ENCODE measurements at regions of chr22 and their contacts with region 1.

Region 1: GRCh38 chr22:21712894-21713712 is 22.5 kb downstream of the YPEL1 start:
- DNase-seq: peak; percentile 78
- H3K4me3 Mint-ChIP-seq: peak overlapping the region; percentile 39
- H3K27ac Mint-ChIP-seq: no peak overlapping the region
- H3K4me1 Mint-ChIP-seq: peaks cover 26% of the 10 kb centered on the region
- H3K27me3 Mint-ChIP-seq: no peaks in the 10 kb centered on the region
- CTCF ChIP-seq: peak; percentile 75

Region 2: DNA sequence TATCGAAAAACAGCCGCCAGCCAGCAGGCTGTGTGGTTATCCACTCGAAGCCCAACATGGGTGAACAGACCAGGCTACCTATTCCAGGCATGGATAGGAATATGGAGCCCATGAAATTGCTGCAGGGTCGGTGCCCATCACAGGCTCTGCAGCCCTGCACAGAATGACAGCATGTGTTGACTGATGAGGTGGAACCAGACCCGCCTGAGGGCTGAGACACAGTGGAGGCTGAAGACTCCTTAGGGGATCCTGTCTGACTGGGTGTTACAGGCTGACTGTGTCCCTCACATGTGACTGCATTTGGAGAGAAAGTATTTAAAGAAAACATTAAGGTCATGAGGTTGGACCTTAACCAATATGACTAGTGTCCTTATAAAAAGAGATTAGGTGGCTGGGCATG is 28.7 kb after region 1 on chr22:
- CTCF ChIA-PET with region 1: no interaction called
- POLR2A ChIA-PET with region 1: no interaction called
- intact Hi-C with region 1: no loop called
- DNase-seq: no peak
- H3K4me3 Mint-ChIP-seq: no peak overlapping the region
- H3K27ac Mint-ChIP-seq: no peak overlapping the region
- H3K4me1 Mint-ChIP-seq: no peaks in the 10 kb centered on the region
- H3K27me3 Mint-ChIP-seq: peaks cover 32% of the 10 kb centered on the region
- CTCF ChIP-seq: no peak

Region 3: DNA sequence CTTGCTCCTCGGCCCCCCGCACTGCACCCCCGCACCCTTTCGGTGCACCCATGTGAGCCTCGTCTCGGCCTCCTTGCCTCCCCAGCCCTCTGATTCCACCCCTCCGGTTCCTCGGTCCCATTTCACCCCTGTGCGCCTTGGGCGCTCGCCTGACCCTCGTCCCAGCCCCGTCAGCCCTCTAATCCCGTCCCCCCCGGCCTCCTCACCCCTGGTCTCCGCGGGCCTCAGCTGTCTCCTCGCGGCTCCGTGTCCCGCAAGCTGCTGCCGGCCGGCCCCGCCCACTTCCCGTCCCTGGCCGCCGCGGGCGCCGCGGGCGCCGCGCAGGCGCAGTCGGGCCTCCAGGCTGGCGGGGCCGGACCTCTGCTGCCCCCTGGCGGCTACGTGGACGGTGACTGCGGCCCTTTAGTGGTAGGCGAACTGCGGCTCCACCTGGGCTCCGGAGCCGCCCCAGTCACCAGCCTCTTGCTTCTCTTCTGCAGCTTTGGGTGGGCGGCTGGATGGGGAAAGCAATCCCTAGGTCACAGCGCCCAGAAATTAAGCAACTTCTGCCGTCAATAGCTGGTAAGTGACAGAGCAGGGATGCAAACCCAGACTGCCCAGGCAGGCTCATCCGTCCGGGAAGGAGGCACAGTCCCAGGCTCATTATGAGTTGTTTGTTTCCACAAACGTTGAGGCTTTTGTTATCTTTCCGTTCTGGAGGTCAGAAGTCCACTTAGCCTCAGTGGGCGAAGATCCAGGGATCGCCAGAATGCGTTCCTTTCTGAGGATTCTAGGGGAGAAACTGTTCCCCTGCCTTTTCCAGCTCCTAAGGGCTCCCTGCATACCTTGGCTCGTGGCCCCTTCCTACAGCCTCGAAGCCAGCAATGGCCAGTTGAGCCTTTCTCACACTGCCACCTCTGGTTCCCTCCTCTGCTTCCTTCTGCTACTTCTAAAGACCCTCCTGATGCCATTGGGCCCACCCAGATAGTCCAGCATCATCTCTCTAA is 239.8 kb after region 1 on chr22 and contains the start of gene PPM1F:
- CTCF ChIA-PET with region 1: interaction called, 7 read pairs
- POLR2A ChIA-PET with region 1: no interaction called
- intact Hi-C with region 1: loop called (anchors 1 kb)
- DNase-seq: peak; percentile 67
- H3K4me3 Mint-ChIP-seq: peak within 1 kb of the TSS; percentile 79
- H3K27ac Mint-ChIP-seq: peak within 1 kb of the TSS; percentile 51
- H3K4me1 Mint-ChIP-seq: peaks cover 6% of the 10 kb centered on the region
- H3K27me3 Mint-ChIP-seq: no peaks in the 10 kb centered on the region
- CTCF ChIP-seq: peak; percentile 86
- total RNA-seq, gene PPM1F: 32.2 and 32.6 TPM in 2 replicates

Region 4: GRCh38 chr22:22043296-22044078 is 330.4 kb after region 1 on chr22:
- CTCF ChIA-PET with region 1: no interaction called
- POLR2A ChIA-PET with region 1: no interaction called
- intact Hi-C with region 1: loop called (anchors 10 kb)
- DNase-seq: no peak
- H3K4me3 Mint-ChIP-seq: no peak overlapping the region
- H3K27ac Mint-ChIP-seq: no peak overlapping the region
- H3K4me1 Mint-ChIP-seq: no peaks in the 10 kb centered on the region
- H3K27me3 Mint-ChIP-seq: peaks cover 41% of the 10 kb centered on the region
- CTCF ChIP-seq: no peak

Measured in MCF 10A (cell line).